Left ventricle myocardium superior (tissue), 1 donor: ENCODE measurements at regions of chr1 and their contacts with region 1.

Region 1: GRCh38 chr1:16009030-16009709 is 5.1 kb downstream of the SRARP start:
- DNase-seq: peak; percentile 85
- ATAC-seq: peak; percentile 2

Region 2: GRCh38 chr1:16055613-16056520 is 46.7 kb after region 1 on chr1:
- intact Hi-C with region 1: loop called (anchors 10 kb)
- DNase-seq: peak; percentile 90
- ATAC-seq: peak; percentile 80